Right ventricle myocardium inferior (tissue), 1 donor: ENCODE measurements at regions of chr4 and their contacts with region 1.

Region 1: DNA sequence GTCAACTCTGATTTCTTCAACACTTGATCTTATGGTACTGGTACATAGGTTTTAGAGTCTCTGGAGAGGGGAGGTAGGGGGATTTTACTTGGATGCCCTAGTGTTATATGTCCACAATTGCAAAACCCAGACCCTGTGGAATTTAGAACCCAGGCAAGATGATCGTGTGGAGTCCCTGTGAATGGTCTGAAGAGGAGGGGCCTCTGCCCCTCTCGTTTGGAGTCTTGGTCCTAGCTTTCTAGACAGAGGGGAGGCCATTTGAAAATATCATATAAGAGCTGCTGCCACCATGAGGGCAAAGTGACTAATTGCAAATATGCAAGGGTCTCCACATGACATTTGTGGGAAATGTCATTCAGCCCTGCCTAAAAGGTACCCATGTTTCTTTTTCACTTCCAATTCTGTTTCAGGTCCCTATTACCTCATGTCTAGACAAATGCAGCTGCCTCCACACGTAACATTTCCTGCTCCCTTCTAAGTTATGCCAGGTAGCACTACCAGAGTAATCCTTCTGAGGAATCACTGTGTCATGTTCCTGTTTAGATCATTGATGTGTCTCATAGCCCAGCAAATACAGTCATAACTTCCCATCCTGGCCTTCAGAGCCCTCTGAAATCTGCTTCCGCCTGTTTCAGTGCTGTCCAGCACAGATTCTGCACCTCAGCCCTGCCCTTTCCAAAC is 126.8 kb downstream of the KLHL8 start:
- DNase-seq: no peak
- ATAC-seq: peak; percentile 74

Region 2: DNA sequence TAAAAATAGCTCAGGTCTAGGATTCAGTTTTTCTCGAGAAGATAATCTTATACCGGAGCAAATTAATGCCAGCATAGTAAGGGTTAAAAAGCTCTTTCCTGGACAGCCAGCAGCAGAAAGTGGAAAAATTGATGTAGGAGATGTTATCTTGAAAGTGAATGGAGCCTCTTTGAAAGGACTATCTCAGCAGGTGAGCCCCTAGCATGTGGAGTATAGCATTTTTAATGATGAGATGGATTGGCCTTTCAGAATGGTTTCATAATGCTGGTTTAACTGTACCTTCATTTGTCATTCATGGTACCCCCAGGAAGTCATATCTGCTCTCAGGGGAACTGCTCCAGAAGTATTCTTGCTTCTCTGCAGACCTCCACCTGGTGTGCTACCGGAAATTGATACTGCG is 323.8 kb before region 1 on chr4:
- intact Hi-C with region 1: no loop called
- DNase-seq: no peak
- ATAC-seq: no peak

Region 3: GRCh38 chr4:86924811-86925210 is 168.8 kb before region 1 on chr4:
- intact Hi-C with region 1: loop called (anchors 2 kb)
- DNase-seq: no peak
- ATAC-seq: no peak

Region 4: DNA sequence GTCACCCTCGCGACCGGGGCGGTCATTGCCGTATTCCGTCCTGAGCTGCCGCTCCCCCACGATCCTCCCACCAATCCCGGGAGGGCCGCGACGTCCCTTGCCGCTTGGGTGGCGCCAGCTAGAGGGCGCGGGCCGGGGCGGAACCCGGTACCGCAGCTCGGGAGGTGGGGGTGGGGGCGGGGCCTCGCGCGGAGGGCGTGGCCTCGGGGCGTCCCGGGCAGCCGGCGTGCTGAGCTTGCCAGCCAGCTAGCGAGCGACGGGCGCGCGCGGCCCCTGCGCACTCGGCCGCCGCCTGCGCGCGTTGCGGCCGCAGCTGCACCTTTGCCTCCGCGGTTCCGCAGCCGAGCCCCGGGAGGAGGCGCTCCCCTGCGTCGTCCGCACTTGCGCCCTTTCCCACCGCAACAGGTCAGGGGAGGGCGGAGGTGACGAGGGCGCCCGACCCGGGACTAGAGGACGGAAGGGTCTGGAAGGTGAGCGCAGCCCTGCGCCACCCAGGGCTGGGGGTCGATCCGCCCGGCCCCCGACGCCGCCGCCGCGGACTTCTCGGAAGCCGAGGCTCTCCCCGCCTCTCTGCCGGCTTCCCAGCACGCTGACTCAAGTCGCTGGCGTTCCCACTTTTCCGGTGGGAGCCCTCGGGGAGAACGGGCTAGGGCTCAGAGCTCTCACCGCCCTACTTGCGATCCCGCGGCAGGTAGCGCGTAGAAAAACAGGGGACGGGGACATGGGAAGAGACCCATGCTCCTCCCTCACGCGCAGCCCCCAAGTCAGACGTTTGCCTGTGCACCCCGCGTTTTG is 158.6 kb before region 1 on chr4 and contains the start of gene AFF1:
- intact Hi-C with region 1: loop called (anchors 2 kb)
- DNase-seq: peak; percentile 96
- ATAC-seq: peak; percentile 96
- total RNA-seq, gene AFF1: 73.3 TPM

Region 5: DNA sequence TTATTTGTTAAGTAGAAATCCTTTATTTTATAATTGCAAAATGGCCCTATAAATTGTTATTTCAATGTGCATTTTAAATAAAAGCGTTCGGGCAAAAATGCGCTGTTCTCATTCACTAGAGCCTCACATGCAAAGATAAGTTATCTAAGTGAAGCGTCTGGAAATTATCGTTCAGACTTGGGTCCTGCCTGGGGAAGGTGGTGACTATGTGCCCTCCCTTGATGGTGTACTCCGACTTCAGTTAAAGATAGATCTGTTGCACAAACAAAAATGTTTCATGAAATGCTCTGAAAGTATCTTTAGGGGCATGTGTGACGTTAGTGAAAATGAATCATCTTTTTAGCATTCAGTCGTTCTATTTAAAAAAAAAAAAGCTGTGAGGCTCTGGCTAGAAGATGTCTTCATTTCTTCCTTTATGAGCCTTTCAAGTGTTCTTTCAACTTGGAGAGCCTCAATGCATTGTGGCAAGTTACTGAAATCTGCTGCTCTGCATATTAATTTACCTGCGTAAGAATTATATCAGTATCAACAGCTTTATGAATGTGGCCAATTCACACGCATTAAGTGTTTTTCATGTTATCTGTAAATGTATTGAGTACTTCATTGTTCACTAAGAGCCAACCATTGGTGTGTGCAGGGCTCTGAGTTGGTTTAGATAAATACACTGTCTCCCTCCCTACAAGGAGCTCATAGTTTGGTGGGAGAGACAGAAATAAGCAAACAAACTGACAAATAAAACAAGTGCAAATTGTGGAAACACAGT is 75.8 kb before region 1 on chr4:
- intact Hi-C with region 1: no loop called
- DNase-seq: no peak
- ATAC-seq: peak; percentile 64

Region 6: DNA sequence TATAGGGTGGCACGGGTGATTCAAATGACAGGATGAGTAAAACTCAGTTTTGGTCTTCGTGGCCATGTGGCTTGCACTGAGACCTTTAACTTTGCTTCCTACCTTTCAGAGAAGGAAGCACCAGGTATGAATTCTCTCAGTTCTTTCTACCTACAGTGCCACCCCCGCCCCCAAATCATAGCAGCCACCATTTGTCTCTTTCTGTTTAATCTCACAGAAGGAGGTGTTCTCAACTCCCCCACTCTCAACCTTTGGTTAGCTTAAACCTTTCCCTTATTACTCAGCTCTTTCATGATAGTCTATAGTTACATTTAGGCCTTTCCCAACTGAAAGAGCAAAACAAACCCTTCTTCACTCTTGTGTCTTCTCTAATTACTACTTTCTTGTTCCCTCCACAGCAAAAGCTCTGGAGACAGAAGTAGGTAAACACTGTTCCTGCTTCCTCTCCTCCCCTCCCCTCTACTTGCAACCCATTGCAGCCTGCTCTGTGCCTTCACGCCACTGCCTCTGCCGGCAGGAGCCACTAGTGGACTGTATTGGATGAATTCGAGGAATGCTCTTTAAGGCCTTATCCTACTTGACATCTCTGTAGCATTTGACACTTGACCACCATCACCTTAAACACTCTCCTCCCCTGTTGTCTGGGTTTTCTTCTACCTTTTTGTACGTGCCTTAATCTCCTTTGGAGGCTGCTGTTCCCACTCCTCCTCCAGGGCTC is 35.1 kb before region 1 on chr4:
- intact Hi-C with region 1: loop called (anchors 5 kb)
- DNase-seq: no peak
- ATAC-seq: peak; percentile 42

Region 7: GRCh38 chr4:87633243-87633642 is 539.7 kb after region 1 on chr4:
- intact Hi-C with region 1: no loop called
- DNase-seq: no peak
- ATAC-seq: peak; percentile 42